ENCODE measurements at regions of chr14 and their contacts with region 1.

Region 1: GRCh38 chr14:50003213-50004031 is 110.5 kb downstream of the ARF6 start:
- DNase-seq: peak; percentile 41 to 89 (median 70)
- ATAC-seq: peak; percentile 13
- H3K4me3 ChIP-seq: peak overlapping the region; percentile 61
- H3K4me3 Mint-ChIP-seq: peak overlapping the region; percentile 91
- H3K27ac ChIP-seq: peak overlapping the region; percentile 95 to 96
- H3K27ac Mint-ChIP-seq: peak overlapping the region; percentile 95
- H3K4me1 ChIP-seq: peaks cover 65% of the 10 kb centered on the region
- H3K4me1 Mint-ChIP-seq: peaks cover 59% of the 10 kb centered on the region
- H3K27me3 ChIP-seq: no peaks in the 10 kb centered on the region
- H3K27me3 Mint-ChIP-seq: no peaks in the 10 kb centered on the region
- CTCF ChIP-seq: peak; percentile 26

Region 2: DNA sequence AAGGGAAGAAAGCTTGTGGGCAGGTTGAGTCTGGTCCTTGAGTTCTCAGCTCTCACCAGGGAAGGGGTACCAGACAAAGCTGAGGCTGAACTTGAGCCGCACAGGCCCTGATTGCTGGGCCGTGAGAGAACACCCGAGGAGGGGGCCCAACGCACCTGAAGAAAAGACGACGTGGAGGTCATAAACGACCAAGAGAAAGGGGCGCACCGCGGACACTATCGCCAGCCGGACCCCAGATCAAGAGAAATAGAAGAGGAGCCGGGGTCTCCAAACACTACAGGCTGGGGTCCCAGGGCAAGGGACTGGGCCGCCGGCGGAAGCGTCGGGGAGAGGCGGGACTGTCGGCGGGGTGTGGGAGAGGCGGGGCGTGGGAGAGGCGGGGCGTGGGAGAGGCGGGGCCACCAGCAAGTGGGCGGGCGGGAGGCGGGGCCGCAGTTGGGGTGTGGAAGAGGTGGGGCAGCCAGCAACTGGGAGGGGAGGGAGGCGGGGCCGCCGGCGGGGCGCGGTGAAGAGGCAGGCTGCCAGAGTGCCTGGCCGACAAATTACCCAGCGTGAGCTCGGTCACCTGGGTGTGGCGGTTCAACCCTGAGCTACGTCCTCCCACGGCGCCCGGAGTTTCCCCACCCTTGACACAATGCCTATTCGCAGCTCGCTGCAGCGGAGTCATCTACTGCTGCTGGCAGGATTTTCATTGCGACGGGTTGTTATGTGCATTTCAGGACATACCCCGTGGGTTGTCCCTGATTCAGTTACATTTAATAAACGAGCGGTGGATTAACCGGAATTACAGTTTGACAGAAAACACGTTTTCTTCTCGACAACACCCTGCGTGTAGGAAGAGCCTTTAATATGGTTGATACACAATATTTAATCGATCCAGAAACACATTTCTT is 135.3 kb before region 1 on chr14:
- CTCF ChIA-PET with region 1: interaction called, 44 read pairs
- POLR2A ChIA-PET with region 1: interaction called, 134 read pairs
- intact Hi-C with region 1: loop called in 1 of 2 experiments (anchors 1 kb)
- DNase-seq: peak; percentile 96 to 99 (median 98)
- ATAC-seq: peak; percentile 89
- H3K4me3 ChIP-seq: peak overlapping the region; percentile 63
- H3K4me3 Mint-ChIP-seq: peak overlapping the region; percentile 89
- H3K27ac ChIP-seq: peak overlapping the region; percentile 93
- H3K27ac Mint-ChIP-seq: peak overlapping the region; percentile 89
- H3K4me1 ChIP-seq: peaks cover 36% of the 10 kb centered on the region
- H3K4me1 Mint-ChIP-seq: peaks cover 14% of the 10 kb centered on the region
- H3K27me3 ChIP-seq: no peaks in the 10 kb centered on the region
- H3K27me3 Mint-ChIP-seq: no peaks in the 10 kb centered on the region
- CTCF ChIP-seq: no peak

Region 3: GRCh38 chr14:49934646-49935045 is 68.8 kb before region 1 on chr14:
- CTCF ChIA-PET with region 1: no interaction called
- POLR2A ChIA-PET with region 1: interaction called, 27 read pairs
- intact Hi-C with region 1: loop called in 1 of 2 experiments (anchors 5 kb)
- DNase-seq: no peak
- ATAC-seq: no peak
- H3K4me3 ChIP-seq: no peak overlapping the region
- H3K4me3 Mint-ChIP-seq: no peak overlapping the region
- H3K27ac ChIP-seq: no peak overlapping the region
- H3K27ac Mint-ChIP-seq: no peak overlapping the region
- H3K4me1 ChIP-seq: peaks cover 3% of the 10 kb centered on the region
- H3K4me1 Mint-ChIP-seq: peaks cover 16% of the 10 kb centered on the region
- H3K27me3 ChIP-seq: no peaks in the 10 kb centered on the region
- H3K27me3 Mint-ChIP-seq: no peaks in the 10 kb centered on the region
- CTCF ChIP-seq: no peak

Region 4: DNA sequence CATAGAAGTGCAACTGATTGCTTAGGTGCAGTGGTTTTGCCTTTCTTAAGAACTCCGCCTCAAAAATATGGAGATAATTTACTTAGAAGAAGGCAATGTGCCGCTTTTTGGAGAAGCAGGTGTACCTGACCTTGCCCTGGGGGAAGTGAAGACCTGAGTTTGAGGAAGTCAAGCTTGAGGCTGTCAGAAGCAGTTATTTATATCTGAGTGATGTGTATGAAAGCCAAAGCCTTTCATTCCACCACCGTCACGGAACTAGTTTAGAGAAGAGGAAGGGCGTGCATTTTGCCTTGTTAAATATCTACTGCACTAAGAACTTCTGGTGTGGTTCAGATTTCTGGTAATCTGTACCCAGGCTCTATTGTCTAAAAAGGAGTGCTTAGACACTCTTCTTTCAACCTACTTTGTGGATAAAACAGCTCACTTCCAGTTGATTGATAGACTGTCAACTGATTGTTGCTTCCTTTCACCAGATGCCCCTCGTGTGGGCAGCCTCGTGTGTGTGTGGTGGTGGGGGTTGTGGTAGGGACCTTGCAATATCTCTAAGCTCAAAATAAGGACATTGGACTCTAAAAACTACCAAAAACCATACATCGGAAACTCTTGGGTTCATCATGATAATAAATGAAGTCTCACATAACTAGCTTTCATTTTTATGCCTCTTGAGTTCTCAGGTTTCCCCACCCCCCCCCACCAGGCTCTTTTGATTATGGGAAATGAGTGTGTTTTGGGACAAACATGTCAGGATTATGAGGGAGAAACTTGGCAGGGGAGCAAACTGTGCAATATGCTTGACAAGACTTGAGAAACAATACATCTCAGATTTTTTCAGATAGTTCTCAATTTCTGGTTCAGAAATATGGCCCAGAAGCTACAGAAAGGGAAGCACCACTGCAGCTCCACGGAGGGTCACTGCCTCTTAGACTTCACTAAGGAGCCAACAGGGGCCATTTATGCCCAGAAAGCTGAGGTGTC is 32.0 kb before region 1 on chr14:
- CTCF ChIA-PET with region 1: interaction called, 7 read pairs
- POLR2A ChIA-PET with region 1: interaction called, 208 read pairs
- intact Hi-C with region 1: loop called (anchors 1 to 2 kb)
- DNase-seq: peak in 13 of 14 experiments; percentile 16 to 87 (median 55)
- ATAC-seq: peak; percentile 84
- H3K4me3 ChIP-seq: peak overlapping the region; percentile 30
- H3K4me3 Mint-ChIP-seq: peak overlapping the region; percentile 50
- H3K27ac ChIP-seq: peak overlapping the region; percentile 80 to 85
- H3K27ac Mint-ChIP-seq: peak overlapping the region; percentile 90
- H3K4me1 ChIP-seq: peaks cover 66% of the 10 kb centered on the region
- H3K4me1 Mint-ChIP-seq: peaks cover 59% of the 10 kb centered on the region
- H3K27me3 ChIP-seq: no peaks in the 10 kb centered on the region
- H3K27me3 Mint-ChIP-seq: no peaks in the 10 kb centered on the region
- CTCF ChIP-seq: no peak

Region 5: DNA sequence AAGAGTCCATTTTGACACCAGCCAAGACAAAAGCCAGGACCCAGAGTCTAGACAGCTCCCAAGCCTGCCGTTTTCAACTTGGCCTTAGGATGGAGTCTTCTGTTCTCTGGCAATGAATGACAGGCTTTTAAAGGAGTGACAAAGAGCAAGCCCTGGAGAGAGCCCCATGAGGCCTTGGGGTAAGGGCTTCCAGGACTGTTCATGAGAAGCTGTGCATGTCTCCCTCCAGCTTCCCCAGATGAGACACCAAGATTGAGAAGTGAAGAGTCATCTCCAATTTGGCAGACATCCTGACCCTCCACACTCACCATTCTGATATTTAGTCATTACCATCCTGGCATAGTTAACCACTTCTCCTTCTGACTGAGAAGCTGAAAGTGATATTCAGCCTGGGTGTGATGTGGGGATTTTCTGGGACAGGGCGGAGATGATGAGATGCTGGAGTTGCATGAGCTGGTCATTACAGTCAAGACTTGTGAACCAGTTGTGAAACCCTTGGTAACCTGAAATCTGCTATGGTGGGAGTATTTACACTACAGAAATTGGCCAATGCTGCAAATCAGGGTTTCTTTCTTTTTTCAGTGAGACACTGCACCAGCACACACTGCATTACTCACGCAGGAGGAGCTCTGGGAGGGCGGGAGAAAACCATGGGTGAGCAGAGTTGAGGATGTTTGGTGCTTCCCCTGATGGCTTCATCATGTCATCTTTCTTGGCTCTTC is 35.1 kb after region 1 on chr14:
- CTCF ChIA-PET with region 1: interaction called, 3 read pairs
- POLR2A ChIA-PET with region 1: interaction called, 17 read pairs
- intact Hi-C with region 1: loop called in 1 of 2 experiments (anchors 5 kb)
- DNase-seq: peak in 7 of 14 experiments; percentile 11 to 78 (median 49)
- ATAC-seq: peak; percentile 11
- H3K4me3 ChIP-seq: no peak overlapping the region
- H3K4me3 Mint-ChIP-seq: peak overlapping the region; percentile 65
- H3K27ac ChIP-seq: peak overlapping the region; percentile 8 to 66
- H3K27ac Mint-ChIP-seq: peak overlapping the region; percentile 55
- H3K4me1 ChIP-seq: peaks cover 62% of the 10 kb centered on the region
- H3K4me1 Mint-ChIP-seq: peaks cover 56% of the 10 kb centered on the region
- H3K27me3 ChIP-seq: no peaks in the 10 kb centered on the region
- H3K27me3 Mint-ChIP-seq: no peaks in the 10 kb centered on the region
- CTCF ChIP-seq: no peak

Region 6: DNA sequence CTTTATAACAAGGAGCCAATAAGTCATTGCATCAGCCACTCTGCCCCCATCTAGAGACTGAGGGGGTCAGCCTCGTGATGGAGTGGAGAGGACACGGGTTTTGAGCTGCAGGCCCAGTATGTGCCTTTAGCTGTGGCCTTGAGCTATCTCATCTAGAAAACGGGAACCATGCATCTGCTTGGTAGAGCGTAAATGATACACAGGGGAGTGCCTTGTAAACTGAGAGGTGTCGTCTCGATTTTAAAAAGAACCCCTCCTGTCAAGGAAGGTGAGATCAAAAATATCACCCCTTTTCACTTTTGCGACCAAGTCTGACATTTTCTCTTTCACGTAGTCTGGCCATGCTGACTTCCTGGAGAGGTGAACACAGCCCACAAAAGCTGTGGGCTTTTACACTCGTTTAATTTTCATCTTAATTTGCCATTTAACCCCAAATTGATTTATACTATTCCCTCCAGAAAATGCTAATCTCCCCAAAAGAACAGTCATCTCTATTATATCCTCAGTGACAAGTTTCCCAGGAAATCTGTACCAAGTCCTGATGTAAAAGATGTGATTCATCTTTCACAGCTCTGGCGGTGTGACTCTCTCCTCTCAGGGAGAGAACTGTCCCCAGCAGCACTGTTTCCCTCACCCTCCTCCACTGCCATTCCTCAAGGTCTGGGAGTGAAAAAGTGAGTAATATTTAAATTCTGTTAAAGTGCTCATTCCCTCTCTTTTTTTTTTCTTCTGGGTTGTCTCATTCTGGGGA is 82.3 kb after region 1 on chr14:
- CTCF ChIA-PET with region 1: interaction called, 12 read pairs
- POLR2A ChIA-PET with region 1: interaction called, 59 read pairs
- intact Hi-C with region 1: loop called in 1 of 2 experiments (anchors 2 kb)
- DNase-seq: peak in 4 of 14 experiments; percentile 28 to 65 (median 55)
- ATAC-seq: no peak
- H3K4me3 ChIP-seq: no peak overlapping the region
- H3K4me3 Mint-ChIP-seq: peak overlapping the region; percentile 65
- H3K27ac ChIP-seq: peak overlapping the region; percentile 96 to 97
- H3K27ac Mint-ChIP-seq: peak overlapping the region; percentile 93
- H3K4me1 ChIP-seq: peaks cover 80% of the 10 kb centered on the region
- H3K4me1 Mint-ChIP-seq: peaks cover 89% of the 10 kb centered on the region
- H3K27me3 ChIP-seq: no peaks in the 10 kb centered on the region
- H3K27me3 Mint-ChIP-seq: no peaks in the 10 kb centered on the region
- CTCF ChIP-seq: no peak

Measured in CD4-positive, alpha-beta T cell (primary cell).